A549 (cell line): ENCODE measurements at regions of chr6 and their contacts with region 1.

Region 1: GRCh38 chr6:31665501-31666336 is at the start of gene CSNK2B:
- DNase-seq: peak; percentile 94 to 96
- ATAC-seq: peak; percentile 88 to 91
- H3K4me3 ChIP-seq: peak within 1 kb of the TSS; percentile 83
- H3K27ac ChIP-seq: peak within 1 kb of the TSS; percentile 90 to 97
- H3K4me1 ChIP-seq: peaks cover 24% of the 10 kb centered on the region
- CTCF ChIP-seq: no peak
- EP300 ChIP-seq: no peak
- POLR2A ChIP-seq: peak; percentile 49
- RAD21 ChIP-seq: no peak
- polyA plus RNA-seq, gene CSNK2B: 41.8 and 61.0 TPM in 2 replicates

Region 2: DNA sequence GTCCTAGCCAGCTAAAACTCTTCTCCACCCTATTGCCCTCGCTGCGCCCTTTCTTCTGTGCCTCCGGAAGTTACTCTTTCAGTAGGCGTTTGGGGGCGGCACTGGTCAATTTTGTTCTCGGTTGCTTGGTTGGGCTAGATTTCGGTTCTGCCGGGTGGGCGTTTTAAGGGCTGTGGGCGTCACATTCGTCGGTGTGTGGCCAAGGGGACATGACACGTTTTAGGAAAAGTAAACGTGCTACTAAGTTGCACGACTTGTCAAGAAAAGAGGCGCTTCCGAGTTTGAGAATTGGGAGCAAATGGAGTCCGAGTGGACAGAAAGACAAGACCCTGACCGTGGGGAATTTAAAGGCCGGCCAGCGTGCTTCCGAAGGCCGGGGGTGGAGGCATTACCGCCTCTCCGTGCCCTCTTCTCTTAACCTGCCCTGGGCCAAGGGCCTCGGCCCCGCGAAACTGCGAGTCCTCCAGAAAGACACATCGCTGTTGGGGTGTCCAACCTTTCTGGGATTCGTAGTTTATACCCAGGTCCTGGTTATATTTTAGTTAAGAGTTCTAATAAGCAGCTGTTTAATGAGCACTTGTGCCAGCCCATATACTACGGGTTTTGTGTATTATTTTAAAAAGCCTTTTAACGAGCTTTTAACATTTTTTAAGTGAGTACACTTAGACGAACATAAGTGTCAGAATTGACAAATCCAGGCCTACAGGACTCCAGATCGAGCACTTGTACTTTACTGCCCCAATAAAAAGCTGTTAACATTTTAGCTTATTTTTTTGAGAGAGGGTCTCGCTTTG is 12.6 kb before region 1 on chr6:
- CTCF ChIA-PET with region 1: interaction called, 12 read pairs
- POLR2A ChIA-PET with region 1: interaction called, 14 read pairs
- DNase-seq: peak in 1 of 2 experiments; percentile 87
- ATAC-seq: peak; percentile 78 to 84
- H3K4me3 ChIP-seq: peak overlapping the region; percentile 69
- H3K27ac ChIP-seq: peak overlapping the region; percentile 91 to 99
- H3K4me1 ChIP-seq: peaks cover 10% of the 10 kb centered on the region; the same call in 2 of the 3 replicates
- CTCF ChIP-seq: no peak
- EP300 ChIP-seq: no peak
- POLR2A ChIP-seq: no peak
- RAD21 ChIP-seq: no peak